ENCODE measurements at regions of chr10 and their contacts with region 1.

Region 1: DNA sequence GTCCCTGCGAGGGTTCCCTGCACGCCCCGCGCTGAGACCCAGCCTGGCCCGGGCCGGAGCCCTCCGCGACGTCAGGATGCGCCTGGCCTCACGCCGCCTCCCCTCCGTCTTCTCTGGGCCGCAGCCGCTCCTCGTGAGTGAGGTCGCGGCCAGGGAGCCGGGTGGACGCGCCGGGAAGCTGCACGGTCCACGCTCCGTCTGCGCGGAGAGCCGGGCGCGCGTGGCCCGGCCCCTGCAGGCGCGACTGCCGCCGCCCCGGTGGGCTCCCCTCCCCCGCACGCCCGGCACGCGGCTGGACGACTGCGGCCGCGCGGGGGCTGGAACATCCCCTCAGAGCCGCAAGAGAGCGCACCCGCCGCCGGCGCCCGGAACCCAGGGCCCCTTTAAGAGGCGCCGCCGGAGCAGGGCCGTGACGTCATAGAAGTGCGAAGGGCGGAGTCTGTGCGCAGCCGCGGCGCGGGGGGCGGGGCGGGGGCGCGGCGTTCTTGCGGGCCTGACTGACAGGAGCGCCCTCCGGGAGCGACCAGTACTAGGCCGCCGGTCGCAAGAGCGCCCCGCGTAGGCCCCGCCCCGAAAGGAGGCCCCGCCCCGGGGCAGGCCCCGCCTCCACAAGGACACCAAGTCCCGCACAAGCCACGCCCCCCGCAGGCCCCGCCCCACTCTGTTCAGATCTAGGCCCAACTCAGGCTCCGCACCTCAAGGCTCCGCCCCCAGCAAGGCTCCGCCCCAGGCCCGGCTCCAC is 445 bp upstream of the INPP5A start:
- DNase-seq: peak; percentile 100
- H3K4me3 ChIP-seq: peak overlapping the region; percentile 64 to 75 (median 68)
- H3K27ac ChIP-seq: peak overlapping the region in 2 of 3 donors; percentile 68 to 84
- H3K4me1 ChIP-seq: peaks cover 58 to 76% of the 10 kb centered on the region in 2 donors
- H3K27me3 ChIP-seq: no peaks in the 10 kb centered on the region
- CTCF ChIP-seq: peak in 3 of 6 experiments; percentile 30 to 46 (median 34)
- POLR2A ChIP-seq: peak in 1 of 2 donors; percentile 86

Region 2: DNA sequence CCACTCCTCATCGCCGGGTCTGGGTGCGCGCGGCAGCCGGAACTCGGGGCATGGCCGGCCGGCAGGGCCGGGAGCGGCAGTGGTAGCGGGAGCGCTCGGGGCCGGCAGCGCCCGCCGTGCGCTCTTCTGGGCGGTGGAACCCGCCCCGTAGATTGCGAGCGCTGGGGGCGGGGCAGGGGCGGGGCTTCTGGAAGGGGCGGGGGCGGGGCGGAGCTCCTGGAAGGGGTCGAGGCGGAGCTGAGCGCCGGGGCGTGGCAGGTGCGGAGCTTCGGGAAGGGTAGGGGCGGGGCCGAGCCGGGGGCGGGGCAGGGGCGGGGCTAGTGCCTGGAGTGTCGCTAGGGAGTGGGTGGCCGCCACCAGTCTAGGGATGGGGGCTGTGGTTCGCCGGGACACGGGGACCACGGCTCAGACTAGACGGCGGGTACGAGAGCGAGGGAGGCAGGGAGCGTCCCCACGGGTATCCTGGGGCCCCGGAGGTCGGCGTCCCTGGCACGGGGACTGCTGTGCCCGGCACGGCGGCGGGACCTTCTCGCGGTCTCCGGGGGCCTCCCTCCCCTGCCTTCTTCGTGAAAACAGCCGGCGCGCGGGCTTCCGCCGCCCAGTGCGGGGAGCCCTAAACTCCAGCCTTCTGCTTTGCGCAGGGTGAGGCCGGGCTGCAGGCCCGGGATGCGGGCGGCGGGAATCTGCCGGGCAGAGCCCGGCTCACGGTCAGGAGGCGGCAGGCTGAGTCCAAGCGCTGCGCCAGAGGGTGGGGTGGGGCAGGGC is 229.1 kb before region 1 on chr10 and contains the start of gene STK32C:
- intact Hi-C with region 1: loop called (anchors 10 kb)
- DNase-seq: peak; percentile 89
- H3K4me3 ChIP-seq: peak within 1 kb of the TSS; percentile 82 to 95 (median 83)
- H3K27ac ChIP-seq: peak within 1 kb of the TSS in 1 of 3 donors; percentile 71
- H3K4me1 ChIP-seq: peaks cover 11 to 17% of the 10 kb centered on the region in 2 donors
- H3K27me3 ChIP-seq: no peaks in the 10 kb centered on the region
- CTCF ChIP-seq: no peak
- POLR2A ChIP-seq: peak in 1 of 2 donors; percentile 69
- total RNA-seq, gene STK32C: 3.3 to 5.7 (median 3.5) TPM

Region 3: GRCh38 chr10:132407814-132408278 is 129.3 kb before region 1 on chr10:
- intact Hi-C with region 1: no loop called
- DNase-seq: peak; percentile 96 to 97
- H3K4me3 ChIP-seq: peak overlapping the region in 1 of 3 donors; percentile 24
- H3K27ac ChIP-seq: peak overlapping the region; percentile 98 to 100 (median 99)
- H3K4me1 ChIP-seq: peaks cover 57 to 68% of the 10 kb centered on the region in 2 donors
- H3K27me3 ChIP-seq: no peaks in the 10 kb centered on the region
- CTCF ChIP-seq: peak in 1 of 6 experiments; percentile 13
- POLR2A ChIP-seq: peak; percentile 54 to 90

Region 4: GRCh38 chr10:132458593-132459300 is 78.4 kb before region 1 on chr10:
- intact Hi-C with region 1: loop called (anchors 5 kb)
- DNase-seq: peak; percentile 46 to 49
- H3K4me3 ChIP-seq: no peak overlapping the region
- H3K27ac ChIP-seq: no peak overlapping the region
- H3K4me1 ChIP-seq: peaks cover 4 to 10% of the 10 kb centered on the region in 2 donors
- H3K27me3 ChIP-seq: no peaks in the 10 kb centered on the region
- CTCF ChIP-seq: peak; percentile 84 to 99 (median 94)
- POLR2A ChIP-seq: no peak

Region 5: GRCh38 chr10:132489087-132489703 is 47.9 kb before region 1 on chr10:
- intact Hi-C with region 1: no loop called
- DNase-seq: no peak
- H3K4me3 ChIP-seq: no peak overlapping the region
- H3K27ac ChIP-seq: no peak overlapping the region
- H3K4me1 ChIP-seq: no peaks in the 10 kb centered on the region
- H3K27me3 ChIP-seq: no peaks in the 10 kb centered on the region
- CTCF ChIP-seq: no peak
- POLR2A ChIP-seq: no peak